T-cell (primary cell): ENCODE measurements at regions of chr6 and their contacts with region 1.

Region 1: DNA sequence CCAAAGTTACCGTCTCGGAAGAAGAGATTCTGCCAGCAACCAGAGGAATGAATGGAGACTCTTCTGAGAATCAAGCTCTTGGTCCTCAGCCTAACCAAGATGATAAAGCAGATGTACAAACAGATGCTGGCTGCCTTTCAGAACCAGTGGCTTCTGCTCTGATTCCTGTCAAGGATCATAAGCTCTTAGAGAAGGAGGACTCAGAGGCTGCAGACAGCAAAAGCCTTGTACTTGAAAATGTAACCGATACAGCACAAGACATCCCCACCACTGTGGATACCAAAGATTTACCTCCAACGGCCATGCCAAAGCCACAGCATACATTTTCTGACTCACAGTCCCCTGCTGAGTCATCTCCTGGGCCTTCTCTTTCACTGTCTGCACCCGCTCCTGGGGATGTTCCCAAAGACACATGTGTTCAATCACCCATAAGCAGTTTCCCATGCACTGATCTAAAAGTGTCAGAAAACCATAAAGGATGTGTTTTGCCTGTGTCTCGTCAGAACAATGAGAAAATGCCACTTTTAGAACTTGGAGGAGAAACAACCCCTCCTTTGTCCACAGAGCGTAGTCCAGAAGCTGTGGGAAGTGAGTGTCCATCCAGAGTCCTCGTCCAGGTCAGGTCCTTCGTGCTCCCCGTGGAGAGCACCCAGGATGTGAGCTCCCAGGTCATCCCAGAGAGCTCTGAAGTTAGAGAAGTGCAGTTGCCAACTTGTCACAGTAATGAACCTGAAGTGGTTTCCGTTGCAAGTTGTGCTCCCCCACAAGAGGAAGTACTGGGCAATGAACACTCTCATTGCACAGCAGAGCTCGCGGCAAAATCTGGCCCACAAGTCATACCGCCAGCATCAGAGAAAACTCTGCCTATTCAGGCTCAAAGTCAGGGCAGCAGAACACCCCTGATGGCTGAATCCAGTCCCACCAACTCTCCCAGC is 109.6 kb downstream of the RTN4IP1 start:
- DNase-seq: peak; percentile 42 to 87 (median 74)
- ATAC-seq: peak; percentile 54 to 73 (median 70)
- H3K4me3 ChIP-seq: peak overlapping the region; percentile 74 to 84
- H3K4me3 Mint-ChIP-seq: peak overlapping the region; percentile 88 to 94 (median 90)
- H3K27ac ChIP-seq: peak overlapping the region; percentile 93
- H3K27ac Mint-ChIP-seq: peak overlapping the region; percentile 96 to 97
- H3K4me1 ChIP-seq: peaks cover 49 to 55% of the 10 kb centered on the region in 2 experiments
- H3K4me1 Mint-ChIP-seq: peaks cover 78 to 86% (median 78%) of the 10 kb centered on the region in 3 donors
- H3K27me3 ChIP-seq: no peaks in the 10 kb centered on the region
- H3K27me3 Mint-ChIP-seq: no peaks in the 10 kb centered on the region

Region 2: DNA sequence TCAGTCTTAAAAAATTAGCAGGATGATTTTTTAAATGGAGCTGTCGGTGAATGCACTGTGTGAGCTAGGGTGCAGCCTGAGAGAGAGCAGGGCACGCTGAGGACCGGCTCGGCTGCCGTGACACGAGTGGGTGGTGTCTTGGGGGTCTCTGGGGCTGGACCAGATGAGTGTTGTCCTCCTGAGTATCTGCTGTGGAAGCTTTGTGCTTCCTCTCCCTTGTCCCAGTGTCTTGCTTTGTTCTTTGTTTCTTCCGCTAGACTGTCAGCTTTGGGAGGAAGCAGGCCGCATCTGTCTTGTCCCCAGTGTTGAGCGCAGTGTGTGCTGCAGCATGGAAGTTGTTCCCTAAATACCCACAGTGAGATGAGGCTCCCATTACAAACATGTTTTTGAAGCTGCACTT is 20.2 kb after region 1 on chr6:
- CTCF ChIA-PET with region 1: interaction called, 4 to 11 read pairs
- POLR2A ChIA-PET with region 1: interaction called, 5 to 7 read pairs
- DNase-seq: no peak
- ATAC-seq: no peak
- H3K4me3 ChIP-seq: no peak overlapping the region
- H3K4me3 Mint-ChIP-seq: no peak overlapping the region
- H3K27ac ChIP-seq: no peak overlapping the region
- H3K27ac Mint-ChIP-seq: peak overlapping the region; percentile 69 to 91
- H3K4me1 ChIP-seq: peaks cover 16% of the 10 kb centered on the region in 2 experiments
- H3K4me1 Mint-ChIP-seq: peaks cover 52 to 55% (median 54%) of the 10 kb centered on the region in 3 donors
- H3K27me3 ChIP-seq: no peaks in the 10 kb centered on the region
- H3K27me3 Mint-ChIP-seq: no peaks in the 10 kb centered on the region

Region 3: GRCh38 chr6:106556368-106556960 is 36.7 kb after region 1 on chr6:
- CTCF ChIA-PET with region 1: interaction called, 4 to 5 read pairs
- POLR2A ChIA-PET with region 1: interaction called, 6 to 12 read pairs
- DNase-seq: peak in 1 of 35 experiments; percentile 62
- ATAC-seq: peak; percentile 45 to 73 (median 52)
- H3K4me3 ChIP-seq: no peak overlapping the region
- H3K4me3 Mint-ChIP-seq: no peak overlapping the region
- H3K27ac ChIP-seq: no peak overlapping the region
- H3K27ac Mint-ChIP-seq: peak overlapping the region; percentile 43 to 50
- H3K4me1 ChIP-seq: no peaks in the 10 kb centered on the region
- H3K4me1 Mint-ChIP-seq: peaks cover 9 to 19% (median 14%) of the 10 kb centered on the region in 3 donors
- H3K27me3 ChIP-seq: no peaks in the 10 kb centered on the region
- H3K27me3 Mint-ChIP-seq: no peaks in the 10 kb centered on the region

Region 4: GRCh38 chr6:108222504-108222903 is 1702.8 kb after region 1 on chr6:
- CTCF ChIA-PET with region 1: no interaction called
- POLR2A ChIA-PET with region 1: interaction called in 1 of 2 experiments, 13 read pairs
- DNase-seq: no peak
- ATAC-seq: no peak
- H3K4me3 ChIP-seq: no peak overlapping the region
- H3K4me3 Mint-ChIP-seq: no peak overlapping the region
- H3K27ac ChIP-seq: no peak overlapping the region
- H3K27ac Mint-ChIP-seq: no peak overlapping the region
- H3K4me1 ChIP-seq: no peaks in the 10 kb centered on the region
- H3K4me1 Mint-ChIP-seq: peaks cover 12 to 14% (median 13%) of the 10 kb centered on the region in 3 donors
- H3K27me3 ChIP-seq: no peaks in the 10 kb centered on the region
- H3K27me3 Mint-ChIP-seq: no peaks in the 10 kb centered on the region